Head of caudate nucleus (tissue), 42 donors: ENCODE measurements at regions of chr2 and their contacts with region 1.

Region 1: DNA sequence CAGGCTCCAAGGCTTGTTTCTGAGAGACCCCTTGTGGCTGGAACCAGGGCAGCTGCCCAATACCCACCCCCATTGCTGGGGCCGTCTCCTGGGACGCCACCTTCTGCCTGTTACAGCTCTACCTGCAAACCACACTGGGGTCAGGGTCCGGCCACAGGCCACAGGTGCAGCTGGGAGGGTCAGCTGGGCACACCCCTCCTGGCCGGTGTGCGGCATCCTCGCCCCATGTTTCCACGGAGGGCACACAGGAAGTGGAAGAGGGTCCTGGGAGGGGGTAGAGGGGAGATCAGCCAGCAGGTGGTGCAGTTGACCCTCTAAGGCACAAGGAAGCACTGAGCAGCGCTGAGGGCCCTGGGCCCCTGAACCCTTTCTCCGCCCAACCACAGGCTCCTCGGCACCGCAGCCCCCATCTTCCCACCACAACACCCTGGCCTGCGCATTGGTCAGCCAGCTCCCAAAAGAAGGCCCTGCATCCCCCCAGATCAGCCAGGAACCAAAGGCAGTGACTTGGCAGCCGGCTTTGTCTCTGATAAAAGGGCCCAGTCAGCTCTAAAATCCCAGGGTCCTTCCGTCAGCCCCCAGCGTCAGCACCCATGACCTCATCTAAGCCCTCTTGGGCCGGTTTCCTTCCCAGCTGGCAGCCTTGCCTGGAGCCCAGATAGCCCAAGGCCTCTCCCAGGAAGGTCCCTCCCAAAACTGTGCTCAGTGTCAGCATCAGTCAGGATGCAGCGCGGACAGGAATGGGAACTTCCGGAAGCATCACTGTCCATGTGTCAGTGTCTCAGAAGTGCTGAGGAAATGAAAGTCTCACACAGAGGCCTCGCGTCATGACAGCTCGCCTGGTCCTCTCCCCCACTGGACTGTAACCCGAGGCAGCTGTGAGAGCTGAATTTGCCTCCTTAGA is 1.7 kb downstream of the ERFE start:
- DNase-seq: peak in 27 of 42 donors; percentile 15 to 73 (median 48)

Region 2: GRCh38 chr2:238216651-238217184 is 56.3 kb after region 1 on chr2:
- intact Hi-C with region 1: no loop called
- DNase-seq: peak; percentile 75 to 95 (median 90)

Region 3: DNA sequence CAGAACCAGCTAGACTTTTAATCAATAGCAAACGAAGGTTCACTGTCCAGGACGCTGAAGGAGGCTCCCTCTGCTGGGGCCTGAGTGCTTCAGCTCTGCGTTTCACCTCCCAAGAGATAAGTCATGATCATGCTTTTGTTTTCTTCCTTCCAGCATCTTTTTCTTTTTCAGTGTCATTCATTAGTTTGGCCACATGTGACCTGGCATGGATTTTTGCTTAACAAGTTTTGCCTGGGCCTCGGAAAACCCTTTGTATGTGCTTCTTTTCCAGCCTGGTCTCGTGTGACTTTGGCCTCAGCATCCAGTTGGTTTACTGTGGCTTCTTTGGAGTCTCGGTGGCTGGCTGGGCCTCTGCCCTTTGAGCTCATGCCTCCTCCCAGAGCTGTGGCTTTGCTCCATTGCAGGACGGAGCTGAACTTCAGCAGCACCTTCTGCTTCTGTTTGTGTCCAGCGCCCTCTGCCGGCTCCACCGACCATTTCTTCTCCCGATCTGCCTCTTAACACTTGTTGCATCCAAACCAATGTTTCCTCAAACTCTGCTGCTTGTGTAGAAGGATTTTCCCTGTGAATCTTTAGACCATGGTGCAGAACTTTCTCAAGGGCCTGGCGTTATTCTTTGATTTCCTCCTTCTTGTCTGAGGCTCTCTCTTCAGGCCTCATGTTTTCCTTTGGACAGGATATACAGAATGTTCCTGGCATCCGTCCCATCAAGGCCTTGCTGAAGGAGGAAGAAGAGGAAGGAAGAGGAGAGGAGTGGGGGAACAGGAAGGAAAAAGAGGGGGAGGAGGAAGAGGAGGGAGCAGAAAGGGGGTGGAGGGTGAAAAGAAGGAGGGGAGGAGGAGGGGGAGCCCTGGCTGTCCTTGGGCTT is 103.0 kb after region 1 on chr2:
- intact Hi-C with region 1: loop called (anchors 5 kb)
- DNase-seq: peak; percentile 84 to 98 (median 95)